GM13977 (cell line): ENCODE measurements at regions of chr14 and their contacts with region 1.

Region 1: DNA sequence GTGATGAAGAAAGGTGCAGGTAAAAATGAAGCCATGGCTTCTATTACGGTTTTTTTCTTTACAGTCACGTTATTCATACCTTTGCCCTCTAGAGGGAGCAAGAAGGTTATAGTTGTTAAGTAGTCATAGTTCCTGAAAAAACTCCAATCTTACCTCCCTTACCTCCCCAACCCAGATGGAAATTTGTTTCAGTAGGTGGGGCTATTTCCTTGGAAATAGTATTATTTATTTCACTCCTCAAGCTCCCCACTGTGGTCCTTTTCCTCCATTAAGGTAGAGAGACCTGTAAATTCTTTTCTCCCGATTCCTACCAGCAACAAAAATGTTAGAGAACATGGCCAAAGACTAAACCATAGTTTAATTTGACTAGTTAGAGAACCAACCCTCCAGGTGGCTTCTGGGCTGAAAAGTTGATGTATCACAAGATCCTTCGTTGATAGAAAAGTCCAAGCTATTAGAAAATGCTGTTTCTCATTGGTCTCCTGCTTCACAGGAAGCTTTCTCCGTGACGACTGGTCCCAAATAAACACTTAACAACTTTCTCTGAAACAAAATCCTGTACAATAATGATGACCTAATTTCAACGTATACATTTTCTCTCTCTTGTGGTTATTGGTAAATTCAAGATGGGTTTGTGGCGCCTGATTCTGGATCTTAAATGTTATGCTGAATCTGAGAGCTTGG is 43.5 kb downstream of the TMX1 start:
- DNase-seq: peak; percentile 33
- CTCF ChIP-seq: peak; percentile 59

Region 2: DNA sequence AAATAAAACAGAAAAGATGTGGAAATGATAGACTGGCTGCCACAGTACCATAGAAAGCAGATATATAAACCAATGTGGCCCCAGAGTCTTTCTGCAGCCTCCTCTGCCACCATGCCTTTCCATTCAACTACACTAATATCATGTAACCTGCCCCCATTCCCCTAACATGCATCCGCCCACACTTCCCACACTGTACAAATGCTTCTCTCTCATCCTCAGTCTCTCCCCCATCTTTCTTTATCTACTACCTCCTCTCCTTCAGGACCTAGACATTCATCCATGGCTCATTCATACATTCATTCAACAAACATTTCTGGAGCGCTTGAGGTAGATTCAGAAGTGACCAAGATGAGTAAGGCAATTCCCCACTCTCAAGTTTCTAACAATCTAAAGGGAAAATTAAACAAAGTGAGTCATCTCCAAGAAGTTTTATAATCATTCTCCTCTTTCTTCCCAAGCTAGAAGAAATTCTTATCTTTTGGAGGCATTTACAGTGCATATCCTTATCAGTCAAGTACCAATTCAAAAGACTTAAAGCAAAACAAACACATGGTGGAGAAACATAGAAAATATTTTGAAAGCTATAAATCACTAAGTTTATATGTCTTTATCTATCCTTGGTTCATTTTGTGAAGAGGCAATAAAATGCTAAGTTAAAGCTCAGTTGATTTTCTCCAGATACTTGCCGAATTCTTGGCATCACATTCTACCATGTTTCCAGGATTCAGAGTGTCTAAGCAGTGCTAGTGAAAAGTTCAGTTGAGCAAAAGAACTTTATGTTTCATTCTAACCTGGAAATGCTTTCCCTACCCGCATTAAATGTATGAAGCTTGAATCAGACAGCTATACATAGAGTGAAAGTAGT is 297.7 kb after region 1 on chr14:
- in situ Hi-C with region 1: no loop called
- DNase-seq: no peak
- CTCF ChIP-seq: no peak

Region 3: DNA sequence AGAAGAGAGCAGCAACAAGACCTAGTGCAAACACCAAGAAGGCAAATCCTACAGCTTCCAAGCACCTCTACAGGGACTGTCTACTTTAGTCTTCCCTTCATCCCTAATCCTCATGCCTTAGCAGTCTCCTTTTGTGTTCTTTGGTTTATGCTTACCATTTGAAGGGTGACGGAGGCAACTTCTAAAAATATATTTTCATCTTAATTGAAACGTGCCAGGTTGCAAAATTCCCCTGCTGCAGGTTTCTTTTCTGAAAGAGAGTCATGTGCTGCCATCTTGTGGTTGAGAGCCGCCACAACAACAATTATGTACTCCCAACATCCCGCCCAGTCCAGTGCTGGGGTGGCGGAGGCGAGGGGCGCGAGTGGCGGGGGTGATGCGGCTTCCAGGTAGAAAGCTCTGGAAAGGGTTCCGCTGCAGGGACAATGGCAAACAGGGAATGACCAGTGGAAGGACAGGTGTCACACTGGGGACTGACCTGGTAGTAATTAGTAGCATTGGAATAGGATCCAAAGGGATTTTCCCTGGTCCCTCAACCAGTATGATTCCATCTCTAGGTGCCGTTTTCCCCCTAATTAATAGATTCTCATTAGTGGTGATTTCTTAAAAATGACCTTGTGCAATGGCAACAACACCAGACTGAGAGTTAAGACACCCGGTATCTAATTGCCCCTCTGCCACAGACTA is 496.6 kb after region 1 on chr14:
- in situ Hi-C with region 1: loop called (anchors 10 kb)
- DNase-seq: peak; percentile 80
- CTCF ChIP-seq: peak; percentile 73

Region 4: GRCh38 chr14:51989293-51990234 is 706.0 kb after region 1 on chr14 and contains the start of gene RTRAF:
- in situ Hi-C with region 1: loop called (anchors 25 kb)
- DNase-seq: peak; percentile 93
- CTCF ChIP-seq: no peak